MCF 10A (cell line): ENCODE measurements at regions of chr2 and their contacts with region 1.

Region 1: DNA sequence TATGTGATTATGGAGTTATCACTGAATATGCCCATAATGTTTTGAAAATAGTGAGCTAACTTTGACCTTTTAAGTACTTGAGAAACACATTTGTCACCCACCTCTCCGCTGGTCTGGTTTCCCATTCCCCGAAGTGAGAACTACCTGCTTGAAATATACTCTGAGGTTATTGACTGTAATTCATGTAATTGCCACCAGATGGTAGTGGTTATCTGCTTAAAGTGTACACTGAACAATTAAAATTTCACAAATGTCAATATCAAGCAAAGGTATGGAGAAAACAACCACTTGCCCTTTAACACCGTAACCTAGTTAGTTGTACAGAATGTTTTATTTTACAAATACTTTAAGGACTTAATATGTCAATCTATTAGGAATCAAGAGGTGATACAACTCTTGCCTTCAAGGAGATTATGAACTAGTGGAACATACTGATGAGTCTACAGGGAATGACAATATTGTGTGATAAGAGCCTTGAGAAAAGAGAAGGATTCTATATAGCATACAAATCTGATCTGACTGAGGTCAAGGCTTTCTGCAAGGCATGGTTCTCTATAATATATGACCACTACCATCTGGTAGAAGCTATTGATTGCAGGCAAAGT is 316.8 kb upstream of the KCNH7 start:
- DNase-seq: peak; percentile 61
- H3K4me3 Mint-ChIP-seq: no peak overlapping the region
- H3K27ac Mint-ChIP-seq: no peak overlapping the region
- H3K4me1 Mint-ChIP-seq: peaks cover 16% of the 10 kb centered on the region
- H3K27me3 Mint-ChIP-seq: no peaks in the 10 kb centered on the region
- CTCF ChIP-seq: peak; percentile 81

Region 2: DNA sequence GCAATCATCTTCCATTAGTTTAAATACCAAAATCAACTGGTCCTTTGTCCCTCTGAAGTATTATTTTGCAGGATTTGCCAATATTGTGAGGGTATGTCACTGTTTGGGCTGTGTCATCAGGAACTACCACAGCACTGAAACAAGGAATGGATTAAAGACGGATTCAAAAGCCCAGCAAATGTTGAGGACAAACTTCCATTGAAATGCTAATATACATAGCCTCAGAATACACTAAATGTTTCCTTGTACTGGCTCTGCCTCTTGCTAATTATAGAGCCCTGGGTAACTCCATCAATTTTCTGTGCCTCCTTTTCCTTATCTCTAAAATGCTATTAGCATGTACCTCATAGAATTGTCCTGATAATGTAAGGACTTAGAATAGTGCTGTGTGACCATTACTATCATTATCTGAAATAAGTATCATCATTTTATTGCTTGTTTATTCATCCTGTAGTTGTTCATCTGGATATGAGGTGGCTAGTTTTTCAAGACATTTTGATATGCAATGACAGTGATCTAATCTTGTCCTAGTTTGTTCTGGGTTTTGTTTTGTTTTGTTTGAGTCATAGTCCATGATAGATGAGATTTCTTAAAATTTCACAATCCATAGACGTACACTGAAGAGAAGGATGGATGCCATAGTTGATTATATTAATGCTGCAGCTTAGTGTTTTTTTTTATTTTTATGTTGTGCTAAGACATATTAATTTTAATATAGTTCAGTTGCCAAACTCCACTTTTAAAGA is 16.6 kb after region 1 on chr2:
- CTCF ChIA-PET with region 1: interaction called, 90 read pairs
- POLR2A ChIA-PET with region 1: interaction called, 6 read pairs
- intact Hi-C with region 1: no loop called
- DNase-seq: peak; percentile 51
- H3K4me3 Mint-ChIP-seq: no peak overlapping the region
- H3K27ac Mint-ChIP-seq: peak overlapping the region; percentile 57
- H3K4me1 Mint-ChIP-seq: peaks cover 14% of the 10 kb centered on the region
- H3K27me3 Mint-ChIP-seq: no peaks in the 10 kb centered on the region
- CTCF ChIP-seq: no peak

Region 3: DNA sequence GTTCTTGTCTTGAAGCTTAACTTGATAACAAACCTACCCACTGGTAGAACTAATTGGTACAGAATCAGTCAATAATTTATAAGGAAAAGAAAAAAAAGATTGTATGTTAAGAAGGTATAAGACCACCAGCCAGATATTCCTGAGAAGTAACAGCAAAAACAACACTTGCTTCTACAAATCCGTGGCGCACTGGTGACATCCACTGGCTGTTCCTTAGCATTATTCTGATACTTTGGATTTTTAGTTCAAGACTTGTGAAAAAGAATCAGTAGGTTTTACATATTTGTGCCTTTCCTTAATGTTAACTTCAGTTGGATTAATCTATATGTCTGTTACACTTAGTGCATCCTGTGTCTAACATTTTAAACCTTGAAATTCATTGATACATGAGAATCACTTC is 1324.1 kb after region 1 on chr2:
- CTCF ChIA-PET with region 1: interaction called, 14 read pairs
- POLR2A ChIA-PET with region 1: no interaction called
- intact Hi-C with region 1: loop called (anchors 1 kb)
- DNase-seq: peak; percentile 42
- H3K4me3 Mint-ChIP-seq: no peak overlapping the region
- H3K27ac Mint-ChIP-seq: no peak overlapping the region
- H3K4me1 Mint-ChIP-seq: no peaks in the 10 kb centered on the region
- H3K27me3 Mint-ChIP-seq: no peaks in the 10 kb centered on the region
- CTCF ChIP-seq: peak; percentile 59

Region 4: DNA sequence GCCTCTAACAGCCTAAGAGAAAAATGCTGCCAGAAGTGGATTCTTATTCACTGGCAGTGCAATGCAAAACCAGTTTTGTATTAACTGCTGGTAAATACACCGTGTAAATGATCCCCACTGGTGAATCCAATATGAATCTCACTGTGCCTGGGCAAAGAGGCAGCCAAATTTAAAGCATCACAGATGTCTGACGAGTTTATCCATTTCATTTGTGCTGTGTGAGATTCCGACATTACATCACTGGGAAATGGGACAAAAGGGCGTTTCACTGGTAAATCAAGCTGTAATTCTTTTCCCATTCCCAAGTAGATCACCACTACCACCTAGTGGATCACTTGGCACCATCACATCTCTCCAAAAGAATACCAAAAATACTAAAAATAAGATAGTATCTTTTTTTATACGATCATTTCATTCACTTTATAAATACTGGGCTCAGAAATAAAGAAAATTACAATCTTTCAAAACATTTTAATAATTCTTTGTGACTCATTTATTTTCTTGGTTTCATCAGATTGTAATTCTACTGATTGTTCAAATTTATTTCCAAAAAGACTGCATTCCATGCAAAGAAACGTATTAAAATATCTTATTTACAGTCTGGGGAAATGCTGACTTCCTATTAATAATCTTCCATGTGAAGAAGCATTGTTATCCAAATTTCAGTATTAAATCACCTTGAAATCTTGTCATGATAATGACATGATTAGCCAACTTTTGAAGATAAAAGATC is 1340.3 kb after region 1 on chr2:
- CTCF ChIA-PET with region 1: interaction called, 11 read pairs
- POLR2A ChIA-PET with region 1: no interaction called
- intact Hi-C with region 1: loop called (anchors 5 kb)
- DNase-seq: peak; percentile 63
- H3K4me3 Mint-ChIP-seq: no peak overlapping the region
- H3K27ac Mint-ChIP-seq: no peak overlapping the region
- H3K4me1 Mint-ChIP-seq: no peaks in the 10 kb centered on the region
- H3K27me3 Mint-ChIP-seq: no peaks in the 10 kb centered on the region
- CTCF ChIP-seq: peak; percentile 68

Region 5: GRCh38 chr2:164538240-164538866 is 1383.0 kb after region 1 on chr2:
- CTCF ChIA-PET with region 1: interaction called, 4 read pairs
- POLR2A ChIA-PET with region 1: no interaction called
- intact Hi-C with region 1: loop called (anchors 1 kb)
- DNase-seq: peak; percentile 62
- H3K4me3 Mint-ChIP-seq: no peak overlapping the region
- H3K27ac Mint-ChIP-seq: no peak overlapping the region
- H3K4me1 Mint-ChIP-seq: peaks cover 12% of the 10 kb centered on the region
- H3K27me3 Mint-ChIP-seq: no peaks in the 10 kb centered on the region
- CTCF ChIP-seq: peak; percentile 82

Region 6: DNA sequence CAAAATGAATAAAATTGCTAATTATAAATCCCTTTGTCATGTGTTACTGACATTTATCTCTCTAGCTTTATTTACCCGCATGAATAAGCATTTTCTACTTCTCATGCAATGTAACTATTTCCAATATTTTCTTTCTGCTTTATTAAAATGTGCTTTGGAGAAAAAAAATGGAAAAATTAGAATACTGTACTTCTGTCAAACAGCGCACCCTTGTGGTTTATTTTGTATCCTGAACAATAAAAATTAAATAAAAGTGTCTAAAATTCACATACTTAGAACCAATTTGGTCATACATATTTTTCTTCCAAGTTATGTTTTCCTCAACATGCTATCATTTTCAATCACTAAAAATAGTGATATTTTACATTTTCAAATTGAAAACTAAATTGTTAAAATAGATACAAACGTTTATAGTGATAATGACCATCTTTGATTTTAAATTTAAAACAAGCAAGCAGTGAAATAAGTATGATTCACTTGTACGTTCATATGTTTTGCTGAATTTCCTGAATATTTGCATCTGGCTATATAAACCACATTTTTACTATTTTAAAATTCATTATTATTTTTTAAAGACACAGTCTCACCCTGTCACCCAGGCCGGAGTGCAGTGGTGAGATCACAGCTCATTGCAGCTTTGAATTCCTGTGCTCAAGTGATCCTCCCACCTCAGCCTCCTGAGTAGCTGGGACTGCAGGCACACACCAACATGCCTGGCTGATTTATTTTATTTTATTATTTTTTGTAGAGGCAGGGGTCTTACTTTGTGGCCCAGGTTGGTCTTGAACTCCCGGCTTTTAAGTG is 1561.8 kb after region 1 on chr2:
- CTCF ChIA-PET with region 1: interaction called, 3 read pairs
- POLR2A ChIA-PET with region 1: no interaction called
- intact Hi-C with region 1: loop called (anchors 10 kb)
- DNase-seq: peak; percentile 56
- H3K4me3 Mint-ChIP-seq: no peak overlapping the region
- H3K27ac Mint-ChIP-seq: no peak overlapping the region
- H3K4me1 Mint-ChIP-seq: peaks cover 15% of the 10 kb centered on the region
- H3K27me3 Mint-ChIP-seq: no peaks in the 10 kb centered on the region
- CTCF ChIP-seq: peak; percentile 53